ENCODE measurements at regions of chr13 and their contacts with region 1.

Region 1: DNA sequence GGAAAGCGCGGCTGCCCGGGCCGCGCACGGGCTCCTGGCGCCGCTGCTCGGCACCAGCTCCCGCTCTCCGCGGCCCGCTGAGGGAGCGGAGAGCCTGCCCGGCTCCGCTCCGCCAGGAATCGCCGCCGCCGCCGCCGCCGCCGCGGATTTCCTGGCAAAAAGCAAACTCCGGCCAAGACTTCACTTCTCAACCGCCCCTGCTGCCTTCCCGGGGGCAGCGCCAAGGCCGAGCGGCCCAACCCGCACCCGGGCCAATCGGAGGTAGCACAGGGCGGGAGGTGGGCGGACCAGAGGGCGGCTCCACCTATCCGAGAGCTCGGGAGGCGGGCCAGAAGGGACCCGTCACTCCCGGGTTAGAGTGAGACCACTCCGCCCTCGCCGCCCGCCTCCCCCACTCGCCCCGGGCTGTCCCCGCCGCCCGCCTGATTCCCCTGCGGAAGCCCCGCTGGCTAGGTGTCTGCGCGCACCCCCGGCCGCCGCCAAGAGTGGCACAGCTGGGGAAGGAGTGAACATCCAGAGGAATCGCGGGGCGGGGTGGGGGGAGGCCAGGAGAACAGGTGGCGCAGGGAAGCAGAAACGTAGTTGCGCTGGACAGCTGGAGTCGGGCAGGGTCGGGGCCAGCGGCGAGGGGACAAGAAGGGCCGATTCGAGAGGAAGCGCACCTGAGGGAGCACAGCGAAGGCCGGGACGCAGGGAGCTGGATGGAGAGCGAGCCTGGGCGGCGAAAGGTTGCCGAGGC is at the start of gene LNX2:
- DNase-seq: peak; percentile 98 to 99 (median 99)
- ATAC-seq: peak; percentile 79 to 89 (median 80)
- H3K4me3 ChIP-seq: peak within 1 kb of the TSS; percentile 44 to 93 (median 86)
- H3K27ac ChIP-seq: peak within 1 kb of the TSS; percentile 96 to 99 (median 98)
- H3K4me1 ChIP-seq: peaks cover 38 to 45% (median 41%) of the 10 kb centered on the region in 3 donors
- H3K27me3 ChIP-seq: no peaks in the 10 kb centered on the region
- CTCF ChIP-seq: no peak
- total RNA-seq, gene LNX2: 11.3 to 18.9 (median 15.0) TPM

Region 2: DNA sequence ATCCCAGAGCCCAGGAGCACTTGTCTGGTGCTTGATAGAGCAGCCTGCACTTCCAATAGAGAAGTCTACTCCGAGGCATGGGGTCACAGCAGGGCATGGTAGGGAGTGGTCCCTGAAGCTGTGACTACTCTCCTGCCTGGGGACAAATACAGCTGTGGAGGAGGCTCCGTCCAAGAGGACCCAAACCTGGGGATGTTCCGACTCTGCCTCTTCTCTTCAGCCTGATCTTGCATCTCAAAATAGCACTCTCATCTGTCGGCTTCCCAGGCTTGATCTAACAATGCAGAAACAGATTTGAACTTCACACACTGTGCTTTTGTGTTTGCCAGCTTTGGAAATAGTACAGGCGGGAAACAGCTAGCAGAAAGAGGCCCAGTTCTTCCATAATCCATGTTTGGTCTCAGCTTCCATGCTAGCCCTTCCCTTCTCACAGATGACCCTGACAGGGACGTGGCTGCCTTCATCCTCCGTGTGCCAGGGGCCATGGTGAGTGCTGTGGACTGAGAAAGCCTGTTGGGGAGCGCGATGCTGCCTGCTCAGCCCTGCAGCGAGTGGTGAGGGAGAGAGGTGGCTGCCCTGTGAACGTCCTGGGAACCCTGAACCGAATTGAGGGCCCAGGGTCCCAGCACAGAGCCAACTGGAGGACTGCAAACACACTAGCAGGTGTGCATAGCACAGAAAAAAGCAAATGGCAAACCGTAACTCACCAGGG is 709.6 kb before region 1 on chr13:
- intact Hi-C with region 1: no loop called
- DNase-seq: no peak
- ATAC-seq: no peak
- H3K4me3 ChIP-seq: no peak overlapping the region
- H3K27ac ChIP-seq: no peak overlapping the region
- H3K4me1 ChIP-seq: no peaks in the 10 kb centered on the region
- H3K27me3 ChIP-seq: peaks cover 0 to 10% (median 0%) of the 10 kb centered on the region in 4 donors
- CTCF ChIP-seq: no peak

Region 3: DNA sequence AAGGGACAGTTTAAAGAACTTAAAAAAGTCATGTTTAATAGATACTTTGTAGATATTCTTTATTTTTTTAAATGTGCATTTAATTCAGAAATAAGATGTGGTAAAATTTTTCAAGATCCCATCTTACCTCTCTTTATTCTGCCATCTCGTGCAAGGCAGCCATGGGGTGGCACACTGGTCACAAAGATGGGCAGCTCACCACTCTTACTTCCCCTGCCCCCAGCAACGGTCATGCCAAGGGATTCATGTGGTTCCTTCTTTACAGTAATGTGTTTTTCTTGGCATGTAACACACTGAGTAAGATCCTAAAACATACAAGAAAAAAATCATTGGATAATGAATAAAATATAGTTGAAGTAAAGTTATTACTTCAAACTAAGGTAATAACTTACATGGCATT is 64.4 kb before region 1 on chr13:
- intact Hi-C with region 1: loop called in 1 of 3 experiments (anchors 10 kb)
- DNase-seq: no peak
- ATAC-seq: peak in 3 of 4 donors; percentile 35 to 51 (median 47)
- H3K4me3 ChIP-seq: no peak overlapping the region
- H3K27ac ChIP-seq: no peak overlapping the region
- H3K4me1 ChIP-seq: peaks cover 10 to 11% (median 10%) of the 10 kb centered on the region in 3 donors
- H3K27me3 ChIP-seq: no peaks in the 10 kb centered on the region
- CTCF ChIP-seq: no peak

Region 4: GRCh38 chr13:28220166-28220565 is 599.6 kb after region 1 on chr13:
- intact Hi-C with region 1: no loop called
- DNase-seq: no peak
- ATAC-seq: no peak
- H3K4me3 ChIP-seq: no peak overlapping the region
- H3K27ac ChIP-seq: no peak overlapping the region
- H3K4me1 ChIP-seq: peaks cover 0 to 2% (median 0%) of the 10 kb centered on the region in 3 donors
- H3K27me3 ChIP-seq: no peaks in the 10 kb centered on the region
- CTCF ChIP-seq: no peak